ENCODE measurements at regions of chr1 and their contacts with region 1.

Region 1: GRCh38 chr1:205812878-205813754 is at the start of gene SLC41A1:
- DNase-seq: peak; percentile 99
- H3K4me3 ChIP-seq: peak within 1 kb of the TSS; percentile 73 to 96 (median 92)
- H3K27ac ChIP-seq: peak within 1 kb of the TSS; percentile 92 to 98 (median 92)
- H3K4me1 ChIP-seq: peaks cover 35 to 57% (median 55%) of the 10 kb centered on the region in 4 donors
- H3K27me3 ChIP-seq: no peaks in the 10 kb centered on the region
- CTCF ChIP-seq: no peak
- EP300 ChIP-seq: no peak
- POLR2A ChIP-seq: peak; percentile 51
- total RNA-seq, gene SLC41A1: 22.4 to 37.1 (median 30.6) TPM

Region 2: DNA sequence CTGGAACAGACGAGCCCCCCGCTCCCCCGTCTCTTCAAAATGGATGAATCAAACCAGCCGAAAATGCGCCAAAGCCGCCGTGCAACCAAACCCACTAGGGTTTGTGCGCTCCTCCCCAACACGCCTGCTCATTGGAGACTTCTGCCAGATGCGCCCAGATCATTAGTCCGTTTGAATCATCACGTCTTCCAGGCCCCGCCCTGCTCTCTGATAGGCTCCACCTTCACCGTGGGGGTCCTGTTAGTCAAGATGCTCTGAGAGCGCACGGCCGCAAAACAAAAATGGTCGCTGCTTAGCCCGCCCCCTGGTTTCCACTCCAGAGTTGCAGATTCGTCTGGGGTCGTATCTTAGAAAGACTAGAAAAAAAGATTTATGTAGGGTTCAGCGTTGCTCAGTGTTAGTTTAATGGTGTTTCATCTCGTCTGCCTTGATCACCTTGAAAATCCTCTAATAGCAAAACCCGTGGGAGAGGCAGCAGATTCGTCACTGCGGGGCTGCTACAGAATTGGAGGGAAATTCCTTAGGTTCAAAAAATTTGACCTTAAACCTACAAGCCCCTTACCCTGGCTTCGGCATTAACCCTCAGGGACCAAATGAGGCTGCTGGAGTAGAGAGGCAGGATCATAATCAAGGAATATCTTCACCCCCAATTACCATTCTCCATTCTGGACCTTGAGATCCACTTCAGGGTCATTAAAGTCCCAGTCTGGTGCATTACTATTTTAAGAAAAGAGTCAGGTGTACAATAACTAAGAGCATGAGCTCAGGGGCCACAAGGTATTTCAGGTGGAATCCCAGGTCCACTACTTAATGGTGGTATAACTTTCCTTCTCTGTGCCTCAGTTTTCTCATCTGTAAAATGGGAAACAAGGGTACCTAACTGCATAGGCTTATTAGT is 62.7 kb before region 1 on chr1 and contains the start of gene NUCKS1:
- intact Hi-C with region 1: loop called (anchors 1 kb)
- DNase-seq: peak; percentile 100
- H3K4me3 ChIP-seq: peak within 1 kb of the TSS; percentile 88 to 92 (median 91)
- H3K27ac ChIP-seq: peak within 1 kb of the TSS; percentile 99 to 100 (median 99)
- H3K4me1 ChIP-seq: peaks cover 25 to 37% (median 35%) of the 10 kb centered on the region in 4 donors
- H3K27me3 ChIP-seq: no peaks in the 10 kb centered on the region
- CTCF ChIP-seq: peak; percentile 13 to 57 (median 26)
- EP300 ChIP-seq: no peak
- POLR2A ChIP-seq: peak; percentile 60
- total RNA-seq, gene NUCKS1: 111 to 120 (median 116) TPM